CD8-positive, alpha-beta T cell (primary cell): ENCODE measurements at regions of chr20 and their contacts with region 1.

Region 1: DNA sequence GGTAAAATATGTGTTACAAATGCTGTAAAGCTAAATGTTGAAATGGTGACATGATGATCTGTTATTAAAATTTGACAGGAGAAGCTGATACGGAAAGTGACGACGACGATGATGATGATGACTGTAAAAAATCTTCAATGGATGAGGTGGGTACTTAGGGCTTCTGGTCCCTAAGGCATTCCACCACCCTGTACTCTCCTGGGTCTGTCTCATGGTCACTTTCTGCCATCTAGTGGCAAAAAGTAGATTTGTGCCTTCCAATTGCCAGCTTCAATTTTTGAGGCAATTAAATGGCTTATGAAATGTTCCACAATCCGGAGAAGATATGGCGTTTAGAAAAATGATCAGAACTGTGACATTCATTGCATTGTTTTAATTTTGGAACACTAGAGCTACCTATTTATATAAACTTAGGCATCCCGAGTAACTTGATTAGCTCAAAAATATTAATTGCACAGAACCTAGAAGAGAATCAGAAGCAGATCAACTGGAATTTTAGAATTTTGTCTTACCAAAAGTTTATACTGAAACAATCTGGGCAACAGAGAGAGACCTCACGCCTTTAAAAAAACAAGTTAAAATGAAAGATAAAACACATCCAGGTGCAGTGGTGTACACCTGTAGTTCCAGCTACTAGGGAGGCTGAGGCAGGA is 346.5 kb upstream of the PLCB4 start:
- DNase-seq: peak in 3 of 9 experiments; percentile 24 to 70 (median 64)
- ATAC-seq: no peak
- H3K4me3 ChIP-seq: no peak overlapping the region
- H3K4me3 Mint-ChIP-seq: no peak overlapping the region
- H3K27ac ChIP-seq: no peak overlapping the region
- H3K27ac Mint-ChIP-seq: no peak overlapping the region
- H3K4me1 ChIP-seq: no peaks in the 10 kb centered on the region
- H3K4me1 Mint-ChIP-seq: no peaks in the 10 kb centered on the region
- H3K27me3 ChIP-seq: no peaks in the 10 kb centered on the region
- H3K27me3 Mint-ChIP-seq: no peaks in the 10 kb centered on the region
- CTCF ChIP-seq: peak; percentile 68

Region 2: DNA sequence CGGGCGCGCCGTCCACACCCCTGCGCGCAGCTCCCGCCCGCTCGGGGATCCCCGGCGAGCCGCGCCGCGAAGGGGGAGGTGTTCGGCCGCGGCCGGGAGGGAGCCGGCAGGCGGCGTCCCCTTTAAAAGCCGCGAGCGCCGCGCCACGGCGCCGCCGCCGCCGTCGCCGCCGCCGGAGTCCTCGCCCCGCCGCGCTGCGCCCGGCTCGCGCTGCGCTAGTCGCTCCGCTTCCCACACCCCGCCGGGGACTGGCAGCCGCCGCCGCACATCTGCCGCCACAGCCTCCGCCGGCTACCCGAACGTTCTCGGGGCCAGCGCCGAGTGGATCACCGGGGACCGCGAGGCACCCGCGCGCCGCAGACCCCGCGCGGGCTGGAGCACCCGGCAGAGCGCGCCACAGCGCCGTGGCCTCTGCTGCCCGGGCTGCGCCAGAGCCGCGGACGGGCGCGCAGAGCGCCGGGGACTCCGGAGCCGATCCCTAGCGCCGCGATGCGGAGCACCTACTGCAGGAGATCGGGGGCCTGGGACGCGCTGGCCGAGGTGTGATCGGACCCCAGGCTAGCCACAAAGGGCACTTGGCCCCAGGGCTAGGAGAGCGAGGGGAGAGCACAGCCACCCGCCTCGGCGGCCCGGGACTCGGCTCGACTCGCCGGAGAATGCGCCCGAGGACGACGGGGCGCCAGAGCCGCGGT is 1954.7 kb before region 1 on chr20 and contains the start of gene BMP2:
- CTCF ChIA-PET with region 1: interaction called, 3 read pairs
- POLR2A ChIA-PET with region 1: no interaction called
- intact Hi-C with region 1: loop called in 1 of 2 experiments (anchors 5 kb)
- DNase-seq: peak in 1 of 9 experiments; percentile 12
- ATAC-seq: no peak
- H3K4me3 ChIP-seq: no peak within 1 kb of the TSS
- H3K4me3 Mint-ChIP-seq: no peak within 1 kb of the TSS
- H3K27ac ChIP-seq: no peak within 1 kb of the TSS
- H3K27ac Mint-ChIP-seq: no peak within 1 kb of the TSS
- H3K4me1 ChIP-seq: no peaks in the 10 kb centered on the region
- H3K4me1 Mint-ChIP-seq: peaks cover 3% of the 10 kb centered on the region
- H3K27me3 ChIP-seq: peaks cover 0 to 2% of the 10 kb centered on the region in 2 experiments
- H3K27me3 Mint-ChIP-seq: peaks cover 54% of the 10 kb centered on the region
- CTCF ChIP-seq: no peak
- total RNA-seq, gene BMP2: not detected

Region 3: DNA sequence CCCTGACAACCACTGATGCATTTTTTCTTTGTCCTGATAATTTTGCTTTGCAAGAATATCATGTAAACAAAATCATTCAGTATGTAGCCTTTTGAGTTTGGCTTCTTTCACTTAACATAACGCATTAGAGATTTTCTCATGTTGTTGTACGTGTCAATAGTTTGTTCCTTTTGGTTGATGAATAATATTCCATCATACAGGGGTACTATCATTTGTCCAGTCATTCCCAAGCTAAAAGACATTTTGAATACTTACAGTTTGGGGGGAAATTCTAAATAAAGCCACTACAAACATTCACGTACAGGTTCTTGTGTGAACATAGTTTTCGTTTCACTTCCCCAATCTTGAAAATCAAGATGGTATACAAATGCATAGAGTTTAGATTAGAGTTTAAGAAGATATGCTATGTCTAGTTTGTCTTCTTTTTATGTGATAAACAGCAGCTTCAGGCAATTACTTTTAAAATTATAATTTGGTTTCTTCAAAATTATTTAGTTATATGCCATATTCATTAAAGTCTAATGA is 787.3 kb before region 1 on chr20:
- CTCF ChIA-PET with region 1: interaction called, 37 read pairs
- POLR2A ChIA-PET with region 1: no interaction called
- intact Hi-C with region 1: loop called in 1 of 2 experiments (anchors 1 kb)
- DNase-seq: no peak
- ATAC-seq: no peak
- H3K4me3 ChIP-seq: no peak overlapping the region
- H3K4me3 Mint-ChIP-seq: no peak overlapping the region
- H3K27ac ChIP-seq: no peak overlapping the region
- H3K27ac Mint-ChIP-seq: no peak overlapping the region
- H3K4me1 ChIP-seq: no peaks in the 10 kb centered on the region
- H3K4me1 Mint-ChIP-seq: no peaks in the 10 kb centered on the region
- H3K27me3 ChIP-seq: no peaks in the 10 kb centered on the region
- H3K27me3 Mint-ChIP-seq: peaks cover 17% of the 10 kb centered on the region
- CTCF ChIP-seq: no peak

Region 4: GRCh38 chr20:8043687-8044282 is 678.6 kb before region 1 on chr20:
- CTCF ChIA-PET with region 1: interaction called, 44 read pairs
- POLR2A ChIA-PET with region 1: no interaction called
- intact Hi-C with region 1: loop called in 1 of 2 experiments (anchors 2 kb)
- DNase-seq: peak in 3 of 9 experiments; percentile 45 to 80 (median 73)
- ATAC-seq: peak; percentile 71
- H3K4me3 ChIP-seq: no peak overlapping the region
- H3K4me3 Mint-ChIP-seq: no peak overlapping the region
- H3K27ac ChIP-seq: no peak overlapping the region
- H3K27ac Mint-ChIP-seq: no peak overlapping the region
- H3K4me1 ChIP-seq: no peaks in the 10 kb centered on the region
- H3K4me1 Mint-ChIP-seq: peaks cover 2% of the 10 kb centered on the region
- H3K27me3 ChIP-seq: no peaks in the 10 kb centered on the region
- H3K27me3 Mint-ChIP-seq: peaks cover 9% of the 10 kb centered on the region
- CTCF ChIP-seq: peak; percentile 95

Region 5: GRCh38 chr20:8305449-8305978 is 416.9 kb before region 1 on chr20:
- CTCF ChIA-PET with region 1: interaction called, 4 read pairs
- POLR2A ChIA-PET with region 1: no interaction called
- intact Hi-C with region 1: loop called in 1 of 2 experiments (anchors 10 kb)
- DNase-seq: peak; percentile 16 to 88 (median 69)
- ATAC-seq: peak; percentile 97
- H3K4me3 ChIP-seq: no peak overlapping the region
- H3K4me3 Mint-ChIP-seq: no peak overlapping the region
- H3K27ac ChIP-seq: no peak overlapping the region
- H3K27ac Mint-ChIP-seq: no peak overlapping the region
- H3K4me1 ChIP-seq: peaks cover 6% of the 10 kb centered on the region
- H3K4me1 Mint-ChIP-seq: peaks cover 7% of the 10 kb centered on the region
- H3K27me3 ChIP-seq: no peaks in the 10 kb centered on the region
- H3K27me3 Mint-ChIP-seq: no peaks in the 10 kb centered on the region
- CTCF ChIP-seq: peak; percentile 67

Region 6: DNA sequence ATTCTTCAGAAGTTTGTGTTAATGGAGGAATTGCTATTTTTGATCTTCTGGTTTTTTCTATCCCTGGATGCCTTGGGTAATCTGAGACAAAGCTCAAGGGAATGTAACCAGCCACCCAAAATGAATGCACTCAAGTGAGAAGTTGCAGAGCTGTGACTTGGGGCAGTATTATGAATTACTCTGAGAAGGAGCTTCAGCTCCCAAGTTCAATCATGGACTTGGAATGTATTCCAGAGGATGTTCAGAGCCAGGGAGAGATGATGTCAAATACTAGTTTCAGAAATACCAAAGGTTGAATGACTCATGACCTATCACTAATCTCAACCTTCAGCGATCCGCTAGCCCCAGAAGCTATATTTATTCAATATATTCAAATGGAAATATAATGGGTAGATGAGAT is 28.7 kb before region 1 on chr20:
- CTCF ChIA-PET with region 1: interaction called, 17 read pairs
- POLR2A ChIA-PET with region 1: no interaction called
- intact Hi-C with region 1: no loop called
- DNase-seq: no peak
- ATAC-seq: no peak
- H3K4me3 ChIP-seq: no peak overlapping the region
- H3K4me3 Mint-ChIP-seq: no peak overlapping the region
- H3K27ac ChIP-seq: no peak overlapping the region
- H3K27ac Mint-ChIP-seq: no peak overlapping the region
- H3K4me1 ChIP-seq: no peaks in the 10 kb centered on the region
- H3K4me1 Mint-ChIP-seq: no peaks in the 10 kb centered on the region
- H3K27me3 ChIP-seq: no peaks in the 10 kb centered on the region
- H3K27me3 Mint-ChIP-seq: no peaks in the 10 kb centered on the region
- CTCF ChIP-seq: no peak

Region 7: DNA sequence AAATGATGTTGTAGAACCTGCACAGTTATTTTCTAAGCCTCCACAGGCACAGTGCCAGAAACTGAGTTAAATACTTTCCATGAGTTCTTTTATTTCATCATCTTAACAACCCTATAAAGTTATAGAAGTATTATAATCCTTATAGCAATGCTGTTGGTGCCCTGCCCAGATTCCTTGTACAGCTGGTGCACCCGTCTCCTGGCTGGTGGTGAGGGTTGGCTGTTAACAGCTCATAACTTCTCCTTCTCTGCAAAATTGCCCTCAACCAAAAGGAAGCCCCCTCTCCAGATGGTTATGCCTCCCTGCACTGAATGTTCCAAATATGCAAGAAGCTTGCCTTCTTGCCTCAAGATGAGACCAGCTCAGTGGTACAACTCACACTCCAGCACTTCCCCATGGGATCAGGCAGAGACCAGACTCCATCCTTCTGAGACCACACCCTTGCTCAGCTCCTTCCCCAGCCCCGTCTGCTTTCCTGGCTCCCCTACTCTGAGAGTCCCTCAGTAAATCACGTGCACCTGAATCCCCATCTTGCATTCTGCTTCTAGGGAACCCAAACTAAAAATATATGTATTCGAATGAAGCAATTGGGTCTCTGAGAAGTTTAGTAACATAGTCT is 42.1 kb after region 1 on chr20:
- CTCF ChIA-PET with region 1: no interaction called
- POLR2A ChIA-PET with region 1: no interaction called
- intact Hi-C with region 1: no loop called
- DNase-seq: no peak
- ATAC-seq: no peak
- H3K4me3 ChIP-seq: no peak overlapping the region
- H3K4me3 Mint-ChIP-seq: no peak overlapping the region
- H3K27ac ChIP-seq: no peak overlapping the region
- H3K27ac Mint-ChIP-seq: no peak overlapping the region
- H3K4me1 ChIP-seq: no peaks in the 10 kb centered on the region
- H3K4me1 Mint-ChIP-seq: no peaks in the 10 kb centered on the region
- H3K27me3 ChIP-seq: no peaks in the 10 kb centered on the region
- H3K27me3 Mint-ChIP-seq: no peaks in the 10 kb centered on the region
- CTCF ChIP-seq: no peak